Activated B cell treated with CpG ODN at 0.5 μM for 24 hours (primary cell): ENCODE measurements at regions of chr3 and their contacts with region 1.

Region 1: GRCh38 chr3:46935168-46935858 is 41.2 kb downstream of the CCDC12 start:
- DNase-seq: no peak
- ATAC-seq: no peak
- H3K4me3 Mint-ChIP-seq: no peak overlapping the region
- H3K27ac Mint-ChIP-seq: peak overlapping the region; percentile 56
- H3K4me1 Mint-ChIP-seq: peaks cover 89% of the 10 kb centered on the region
- H3K27me3 Mint-ChIP-seq: no peaks in the 10 kb centered on the region
- CTCF ChIP-seq: no peak

Region 2: DNA sequence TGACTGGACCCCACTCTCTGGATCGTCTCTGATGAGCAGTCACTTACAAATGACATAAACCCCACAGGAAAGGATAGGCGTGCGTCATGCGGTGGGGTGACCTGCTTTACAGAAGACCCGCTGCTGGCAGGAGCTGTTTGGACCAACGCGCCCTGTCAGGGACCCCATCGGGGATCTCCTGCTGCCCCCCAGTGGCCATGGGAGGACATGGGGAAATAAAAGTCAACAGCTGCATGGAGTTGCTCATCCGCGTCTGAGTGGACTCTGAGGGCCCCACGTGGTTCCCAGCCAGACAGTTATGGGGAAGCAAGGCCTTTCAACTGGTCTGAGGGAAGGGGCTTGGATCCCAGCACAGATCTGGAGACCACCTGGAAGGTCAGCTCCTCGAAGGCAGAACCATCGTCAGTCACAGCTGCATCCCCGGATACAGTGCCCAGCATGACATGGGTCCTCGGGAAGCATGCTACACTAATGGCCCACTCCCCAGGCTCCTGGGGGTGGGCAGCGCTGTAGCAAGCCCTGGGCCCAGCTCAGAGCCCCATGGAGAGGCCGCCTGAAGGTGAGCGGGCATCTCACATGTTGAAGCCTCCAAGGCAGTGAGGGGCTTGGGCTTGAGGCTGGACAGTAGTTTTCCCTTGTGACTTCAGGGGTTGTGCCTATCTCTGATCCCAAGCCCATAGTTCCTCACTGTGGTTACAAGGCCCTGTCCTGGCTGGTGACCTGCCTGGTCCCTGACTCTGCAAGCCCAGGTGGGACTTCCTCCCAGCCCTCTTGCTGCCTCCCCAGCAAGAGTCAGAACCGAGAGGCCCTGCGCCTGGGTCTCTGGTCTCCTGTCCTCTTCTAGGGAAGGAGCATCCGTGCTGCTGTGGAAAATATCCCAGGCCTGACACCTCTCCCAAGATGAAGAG is 25.5 kb before region 1 on chr3:
- CTCF ChIA-PET with region 1: interaction called, 9 read pairs
- POLR2A ChIA-PET with region 1: interaction called, 10 read pairs
- intact Hi-C with region 1: no loop called
- DNase-seq: peak; percentile 68
- ATAC-seq: peak; percentile 91
- H3K4me3 Mint-ChIP-seq: no peak overlapping the region
- H3K27ac Mint-ChIP-seq: no peak overlapping the region
- H3K4me1 Mint-ChIP-seq: peaks cover 7% of the 10 kb centered on the region
- H3K27me3 Mint-ChIP-seq: no peaks in the 10 kb centered on the region
- CTCF ChIP-seq: peak; percentile 44

Region 3: DNA sequence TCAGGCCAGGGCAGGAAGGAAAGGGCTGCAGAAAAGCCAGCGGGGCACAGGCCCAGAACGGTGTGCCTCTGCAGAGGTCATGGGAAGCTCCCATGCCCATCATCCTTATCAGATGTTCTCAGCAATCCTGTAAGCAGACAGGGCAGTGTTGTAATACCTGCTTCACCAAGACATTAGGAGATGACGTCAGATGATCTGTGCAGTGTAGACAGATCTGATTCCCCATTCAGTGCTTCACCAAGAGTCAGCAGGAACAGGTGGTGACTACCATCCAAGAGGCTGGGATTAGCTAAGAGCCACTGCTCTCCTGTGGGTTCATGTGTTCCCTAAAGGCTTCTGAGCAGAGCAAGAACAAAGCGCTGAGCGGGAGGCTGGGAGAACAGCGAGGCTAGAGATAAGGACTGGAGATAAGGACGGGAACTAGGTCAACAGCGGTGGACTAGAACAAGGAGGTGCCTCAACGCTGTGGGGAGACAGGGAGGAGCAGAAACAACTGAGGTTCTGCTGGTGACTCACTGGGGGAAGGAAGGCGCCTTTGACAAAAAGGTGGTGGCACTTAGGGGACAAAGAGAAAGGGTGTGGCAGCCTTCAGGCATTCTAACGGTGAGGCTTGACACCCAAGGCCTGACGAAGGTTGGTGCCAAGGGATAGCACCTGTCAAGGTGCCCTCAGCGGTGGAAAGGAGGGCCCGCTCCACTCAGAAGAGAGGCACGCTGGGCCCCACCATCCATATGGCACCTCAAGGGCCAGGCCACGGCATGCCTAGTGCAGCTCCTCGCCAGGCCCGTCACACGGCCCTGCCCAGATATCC is 12.9 kb after region 1 on chr3:
- CTCF ChIA-PET with region 1: interaction called, 4 read pairs
- POLR2A ChIA-PET with region 1: interaction called, 12 read pairs
- intact Hi-C with region 1: loop called (anchors 2 kb)
- DNase-seq: no peak
- ATAC-seq: no peak
- H3K4me3 Mint-ChIP-seq: peak overlapping the region; percentile 11
- H3K27ac Mint-ChIP-seq: peak overlapping the region; percentile 66
- H3K4me1 Mint-ChIP-seq: peaks cover 90% of the 10 kb centered on the region
- H3K27me3 Mint-ChIP-seq: no peaks in the 10 kb centered on the region
- CTCF ChIP-seq: no peak

Region 4: DNA sequence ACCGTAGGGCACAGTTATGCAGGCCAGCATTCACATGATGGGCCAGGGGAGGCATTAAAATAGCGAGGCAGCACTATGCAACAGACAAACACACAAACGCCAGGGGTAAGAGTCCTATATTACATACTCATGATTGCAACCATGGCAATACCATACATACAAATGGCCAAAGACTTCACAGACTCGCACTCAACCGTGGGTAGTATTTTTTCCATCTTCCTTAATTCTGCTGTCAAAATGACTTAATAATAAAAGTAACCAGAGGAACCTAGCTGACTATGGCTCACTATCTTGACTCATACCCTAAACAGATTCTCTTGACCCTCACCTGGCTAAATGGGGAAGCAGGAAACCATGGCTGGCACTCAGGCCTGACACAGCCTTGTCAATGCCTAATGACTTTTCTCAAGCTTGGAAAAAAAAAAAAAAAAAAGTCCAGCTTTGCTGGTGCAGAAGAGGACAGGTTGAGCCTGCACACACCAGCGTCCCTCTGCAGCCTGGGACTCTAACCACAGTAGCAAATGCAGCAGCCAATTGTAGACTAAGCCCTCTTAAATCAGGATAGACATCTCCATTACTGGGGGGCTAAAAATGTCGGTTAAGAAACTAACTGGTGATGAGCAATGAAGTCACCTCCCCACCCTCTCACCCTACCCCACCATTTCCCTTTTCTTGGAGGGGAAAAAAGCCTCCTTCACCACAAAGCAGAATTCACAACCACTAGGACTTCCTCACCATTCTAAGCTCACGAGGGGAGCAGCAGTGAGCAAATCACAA is 18.1 kb after region 1 on chr3:
- CTCF ChIA-PET with region 1: no interaction called
- POLR2A ChIA-PET with region 1: interaction called, 12 read pairs
- intact Hi-C with region 1: loop called (anchors 2 kb)
- DNase-seq: no peak
- ATAC-seq: peak; percentile 79
- H3K4me3 Mint-ChIP-seq: peak overlapping the region; percentile 64
- H3K27ac Mint-ChIP-seq: peak overlapping the region; percentile 78
- H3K4me1 Mint-ChIP-seq: peaks cover 88% of the 10 kb centered on the region
- H3K27me3 Mint-ChIP-seq: no peaks in the 10 kb centered on the region
- CTCF ChIP-seq: no peak